ENCODE measurements at regions of chr15 and their contacts with region 1.

Region 1: GRCh38 chr15:68875377-68876116 is 54.8 kb upstream of the SPESP1 start:
- DNase-seq: peak; percentile 96
- ATAC-seq: peak; percentile 97

Region 2: DNA sequence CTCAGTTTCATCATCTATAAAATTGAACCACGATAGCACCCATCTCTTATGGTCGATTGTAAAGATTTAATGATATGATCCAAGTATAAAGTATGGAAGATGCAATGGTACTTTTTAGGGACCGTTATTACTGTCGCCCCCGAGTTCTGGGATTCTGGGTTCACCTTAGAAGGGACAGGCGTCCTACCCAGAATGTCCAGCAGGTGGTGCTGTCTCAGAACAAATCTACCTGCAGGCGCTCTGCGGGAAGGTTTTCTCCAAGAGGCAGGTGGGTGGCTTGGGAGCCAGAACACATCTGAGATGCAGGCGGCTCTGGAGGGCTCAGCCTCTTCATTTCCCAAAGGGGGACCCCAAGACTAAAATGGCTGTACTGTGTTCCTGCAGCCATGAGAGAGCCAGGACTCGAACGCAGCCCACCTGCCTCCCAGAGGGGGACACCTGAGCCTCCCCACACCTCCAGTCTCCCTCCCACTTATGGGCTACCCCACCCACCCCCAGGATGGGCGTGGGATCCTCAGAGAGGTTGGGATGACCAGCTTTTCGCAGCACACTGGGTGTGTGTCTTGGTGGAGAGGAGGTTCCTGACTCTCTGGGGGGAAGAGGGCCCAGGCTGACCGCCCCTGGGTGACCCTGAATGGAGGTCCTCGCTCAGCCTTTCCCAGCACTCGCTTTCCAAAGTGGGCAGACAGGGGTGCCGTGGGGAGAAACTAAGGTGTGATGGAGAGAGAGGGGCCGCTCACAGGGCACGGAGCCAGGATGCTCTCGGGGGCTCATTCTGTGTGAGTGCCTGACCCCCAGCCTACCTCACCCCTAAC is 324.9 kb before region 1 on chr15:
- intact Hi-C with region 1: loop called (anchors 5 kb)
- DNase-seq: peak; percentile 83
- ATAC-seq: peak; percentile 45

Region 3: DNA sequence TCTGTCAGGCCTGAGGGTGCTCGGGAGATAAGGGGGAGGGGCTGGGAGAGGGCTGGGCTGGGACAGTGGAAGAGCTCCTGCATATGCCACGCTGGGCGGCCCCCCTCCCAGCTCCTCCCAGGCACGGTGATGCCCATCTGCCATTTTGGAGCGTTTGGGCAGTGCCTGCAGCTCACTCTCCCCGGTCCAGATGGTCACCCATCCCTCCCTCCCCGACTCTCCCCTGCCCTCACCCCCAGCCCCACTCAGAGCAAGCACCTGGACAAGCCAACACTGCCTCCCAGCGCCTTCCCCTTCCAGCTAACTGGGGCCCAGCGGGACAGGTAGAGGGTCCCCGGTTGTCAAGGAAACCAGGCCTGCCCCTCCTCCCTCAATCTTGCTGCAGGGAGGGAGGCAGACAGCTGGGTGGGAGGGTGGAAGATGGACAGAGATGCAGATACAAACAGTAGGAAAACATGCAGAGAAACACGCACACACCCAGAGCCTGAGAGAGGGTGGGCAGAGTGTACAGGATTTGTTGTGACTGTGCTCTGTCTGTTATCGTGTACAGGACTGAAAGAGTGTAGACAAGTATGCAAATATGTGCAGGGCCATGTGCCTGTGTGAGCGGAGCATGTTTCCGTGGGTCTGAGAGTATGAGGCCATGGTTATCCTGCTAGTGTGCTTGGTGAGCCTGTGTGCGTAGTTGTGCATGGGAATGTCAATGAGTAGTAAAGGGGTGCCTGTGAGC is 314.2 kb before region 1 on chr15:
- intact Hi-C with region 1: no loop called
- DNase-seq: no peak
- ATAC-seq: no peak